Activated naive CD8-positive, alpha-beta T cell treated with anti-CD3 and anti-CD28 coated beads, Interleukin-2, amount 10 ng/mL, durations not matched to agents 7 days and 5 days (primary cell): ENCODE measurements at regions of chr7 and their contacts with region 1.

Region 1: DNA sequence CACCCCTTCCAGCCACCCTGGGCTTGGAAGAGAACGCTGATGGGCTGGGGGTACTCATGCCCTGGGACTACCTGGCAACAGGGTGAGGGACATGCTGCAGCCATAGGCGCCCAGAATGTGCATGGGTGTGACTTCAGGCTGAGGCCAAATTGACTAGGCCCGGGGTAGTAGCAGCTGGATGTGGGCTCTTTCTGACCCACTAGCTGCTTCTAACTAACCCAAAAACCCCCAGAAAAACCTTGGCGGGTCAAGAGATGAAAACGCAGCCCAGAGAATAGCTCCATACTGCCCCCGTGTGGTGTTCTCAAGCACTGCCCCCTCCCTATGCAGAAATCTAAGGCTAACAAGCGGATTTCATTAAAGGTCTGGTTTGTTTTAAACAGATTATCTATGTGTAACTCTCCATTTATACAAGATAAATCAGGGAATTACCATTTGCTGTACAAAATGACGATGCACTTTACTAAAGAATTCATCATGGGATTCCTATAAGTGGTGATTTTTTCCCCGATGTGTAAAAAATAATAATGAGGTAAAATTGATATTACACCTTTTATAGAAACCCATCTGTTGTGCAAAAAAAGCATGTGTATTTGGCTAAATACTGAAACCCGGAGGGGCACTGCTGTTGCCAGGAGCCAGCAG is 4.2 kb downstream of the SMARCD3 start:
- DNase-seq: peak; percentile 71
- ATAC-seq: peak; percentile 5
- H3K4me3 Mint-ChIP-seq: peak overlapping the region; percentile 82
- H3K27ac Mint-ChIP-seq: peak overlapping the region; percentile 97
- H3K4me1 Mint-ChIP-seq: peaks cover 31% of the 10 kb centered on the region
- H3K27me3 Mint-ChIP-seq: peaks cover 33% of the 10 kb centered on the region

Region 2: DNA sequence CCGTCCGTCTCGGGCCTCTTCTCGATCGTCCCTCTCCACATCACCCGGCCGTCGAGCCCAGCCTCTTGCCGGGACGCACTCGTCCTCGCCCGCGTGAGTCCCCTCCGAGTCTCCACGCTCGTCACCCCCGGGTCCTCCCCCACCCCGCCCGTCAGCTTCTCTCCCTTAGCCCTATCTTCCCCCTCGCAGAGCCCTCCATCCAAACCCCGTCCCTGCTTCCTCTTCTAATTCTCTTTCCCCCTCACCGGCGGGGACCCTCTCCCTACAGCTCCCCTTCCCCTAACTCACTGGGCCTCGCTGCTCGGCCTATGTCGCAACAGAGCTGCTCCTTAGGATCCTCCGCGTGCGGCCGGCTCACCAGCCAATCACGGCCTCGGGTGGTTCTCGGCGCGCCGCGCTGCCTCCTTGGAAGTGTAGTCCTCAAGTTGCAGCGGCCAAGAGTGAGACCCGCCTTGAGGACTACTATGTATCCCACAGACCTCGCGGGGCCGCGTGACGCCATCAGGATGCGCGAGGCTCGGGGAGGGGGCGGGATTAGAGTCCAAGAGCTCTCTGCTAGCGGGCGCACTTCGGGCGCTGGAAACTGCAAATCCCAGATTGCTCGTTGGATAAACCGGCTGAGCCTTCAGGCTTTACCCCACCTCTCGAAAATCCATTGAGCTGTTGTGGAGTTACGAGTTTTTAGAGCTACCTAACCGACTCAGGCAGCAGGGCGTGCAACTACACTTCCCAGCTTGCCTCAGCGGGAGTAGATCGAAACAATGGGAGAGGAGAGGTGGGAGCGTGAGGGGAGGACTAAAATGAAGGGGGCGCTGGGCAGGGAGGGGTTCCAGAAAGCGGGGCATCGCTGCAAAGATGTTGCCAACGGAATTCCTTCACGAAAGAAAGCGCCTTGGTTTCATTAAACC is 17.2 kb before region 1 on chr7 and contains the start of gene ABCF2:
- POLR2A ChIA-PET with region 1: interaction called, 39 read pairs
- DNase-seq: peak; percentile 97
- ATAC-seq: peak; percentile 100
- H3K4me3 Mint-ChIP-seq: peak within 1 kb of the TSS; percentile 93
- H3K27ac Mint-ChIP-seq: peak within 1 kb of the TSS; percentile 86
- H3K4me1 Mint-ChIP-seq: peaks cover 29% of the 10 kb centered on the region
- H3K27me3 Mint-ChIP-seq: peaks cover 6% of the 10 kb centered on the region
- total RNA-seq, gene ABCF2: 29.5 to 31.2 TPM

Region 3: DNA sequence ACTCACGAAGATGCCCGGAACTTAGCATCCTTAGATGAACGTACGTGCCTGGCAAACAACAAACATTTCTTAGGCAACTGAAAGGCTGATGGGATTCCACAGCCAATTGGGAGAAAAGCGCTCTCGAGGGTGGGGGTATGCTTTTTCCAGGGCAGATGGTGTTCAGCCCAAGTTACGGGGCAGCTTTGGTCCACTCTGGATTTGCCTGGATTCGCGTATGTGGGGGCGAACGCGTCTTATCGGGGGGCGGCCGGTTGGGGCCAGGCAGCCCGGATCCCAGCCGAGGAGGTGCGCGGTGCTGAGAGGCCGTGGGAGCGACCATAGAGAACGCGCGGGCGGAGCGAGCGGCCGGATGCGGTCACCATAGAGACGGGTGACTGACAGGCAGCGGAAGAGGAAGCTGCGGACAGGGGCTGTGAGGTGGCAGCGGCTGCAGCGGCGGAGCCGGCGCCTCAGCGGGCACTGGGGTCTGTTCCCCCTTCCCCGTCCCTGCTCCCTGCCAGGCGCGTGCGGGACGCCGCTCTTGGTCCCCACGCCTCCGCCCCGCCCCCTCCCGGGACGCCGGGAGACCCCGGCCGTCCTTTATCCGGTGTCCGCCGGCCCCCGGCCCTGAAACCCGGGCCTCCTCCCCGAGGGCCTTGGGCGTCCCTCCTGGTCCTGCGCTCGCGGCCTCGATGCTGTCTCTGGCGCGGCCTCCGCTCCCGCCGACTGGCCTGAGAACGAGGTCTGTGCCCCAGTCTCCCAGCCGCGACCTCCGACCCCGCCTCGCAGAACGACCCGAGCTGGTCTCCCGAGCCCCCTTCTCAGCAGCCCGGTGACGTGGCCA is 12.0 kb before region 1 on chr7 and contains the start of gene CHPF2:
- POLR2A ChIA-PET with region 1: interaction called, 39 read pairs
- DNase-seq: peak; percentile 91
- ATAC-seq: peak; percentile 88
- H3K4me3 Mint-ChIP-seq: peak within 1 kb of the TSS; percentile 99
- H3K27ac Mint-ChIP-seq: peak within 1 kb of the TSS; percentile 99
- H3K4me1 Mint-ChIP-seq: peaks cover 20% of the 10 kb centered on the region
- H3K27me3 Mint-ChIP-seq: peaks cover 6% of the 10 kb centered on the region
- total RNA-seq, gene CHPF2: 44.3 to 48.4 TPM